Activated CD8-positive, alpha-beta T cell treated with anti-CD3 and anti-CD28 coated beads for 36 hours (primary cell): ENCODE measurements at regions of chr6 and their contacts with region 1.

Region 1: GRCh38 chr6:154606457-154606856 is 96.0 kb upstream of the CNKSR3 start:
- DNase-seq: peak; percentile 99
- ATAC-seq: peak; percentile 95
- H3K4me3 Mint-ChIP-seq: peak overlapping the region; percentile 50
- H3K27ac Mint-ChIP-seq: peak overlapping the region; percentile 86
- H3K4me1 Mint-ChIP-seq: peaks cover 38% of the 10 kb centered on the region
- H3K27me3 Mint-ChIP-seq: peaks cover 3% of the 10 kb centered on the region
- CTCF ChIP-seq: no peak

Region 2: DNA sequence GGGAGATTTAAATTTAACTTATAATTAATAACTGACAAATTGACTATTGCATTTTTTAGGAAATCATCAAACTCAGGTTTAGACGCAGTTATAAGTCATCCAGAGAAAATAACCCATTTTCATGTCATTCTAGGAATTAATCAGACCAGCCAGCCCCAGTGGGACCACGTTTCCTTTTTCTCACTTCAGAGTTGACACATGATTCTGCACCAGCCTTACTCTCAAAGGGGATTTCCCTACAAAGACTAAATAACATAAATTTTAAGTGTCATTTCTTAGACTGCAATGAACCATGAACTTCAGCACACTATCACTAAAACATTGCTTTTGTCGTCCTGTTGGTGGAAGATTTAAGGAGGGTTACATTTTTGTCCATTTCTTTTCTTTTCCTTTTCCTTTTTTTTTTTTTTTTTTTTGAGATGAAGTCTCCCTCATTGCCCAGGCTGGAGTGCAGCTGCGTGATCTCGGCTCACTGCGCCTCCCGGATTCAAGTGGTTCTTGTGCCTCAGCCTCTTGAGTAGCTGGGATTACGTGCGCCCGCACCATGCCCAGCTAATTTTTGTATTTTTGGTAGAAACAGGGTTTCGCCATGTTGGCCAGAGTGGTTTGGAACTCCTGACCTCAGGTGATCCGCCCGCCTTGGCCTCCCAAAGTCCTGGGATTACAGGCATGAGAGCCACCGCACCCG is 253.4 kb before region 1 on chr6:
- CTCF ChIA-PET with region 1: no interaction called
- POLR2A ChIA-PET with region 1: no interaction called
- intact Hi-C with region 1: loop called (anchors 5 kb)
- DNase-seq: peak; percentile 82
- ATAC-seq: peak; percentile 84
- H3K4me3 Mint-ChIP-seq: no peak overlapping the region
- H3K27ac Mint-ChIP-seq: no peak overlapping the region
- H3K4me1 Mint-ChIP-seq: peaks cover 50% of the 10 kb centered on the region
- H3K27me3 Mint-ChIP-seq: peaks cover 8% of the 10 kb centered on the region
- CTCF ChIP-seq: no peak

Region 3: DNA sequence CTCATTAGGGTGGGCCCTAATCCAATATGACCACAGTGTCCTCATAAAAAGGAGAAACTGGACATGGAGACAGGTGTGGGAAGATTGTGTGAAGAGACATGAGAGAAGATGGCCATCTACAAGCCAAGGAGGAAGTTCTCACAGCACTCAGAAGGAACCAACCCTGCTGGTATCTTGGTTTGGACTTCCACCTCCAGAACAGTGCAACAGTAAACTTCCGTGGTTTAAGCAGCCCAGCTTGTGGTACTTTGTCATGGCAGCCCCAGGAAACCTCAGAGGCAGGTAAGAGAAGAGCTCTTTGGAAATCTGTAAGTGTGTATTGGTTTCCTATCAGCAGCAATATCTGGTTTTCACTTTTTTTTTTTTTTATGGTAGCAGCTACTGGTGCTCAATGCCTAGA is 79.5 kb before region 1 on chr6:
- CTCF ChIA-PET with region 1: no interaction called
- POLR2A ChIA-PET with region 1: no interaction called
- intact Hi-C with region 1: no loop called
- DNase-seq: no peak
- ATAC-seq: no peak
- H3K4me3 Mint-ChIP-seq: no peak overlapping the region
- H3K27ac Mint-ChIP-seq: no peak overlapping the region
- H3K4me1 Mint-ChIP-seq: no peaks in the 10 kb centered on the region
- H3K27me3 Mint-ChIP-seq: peaks cover 2% of the 10 kb centered on the region
- CTCF ChIP-seq: no peak

Region 4: DNA sequence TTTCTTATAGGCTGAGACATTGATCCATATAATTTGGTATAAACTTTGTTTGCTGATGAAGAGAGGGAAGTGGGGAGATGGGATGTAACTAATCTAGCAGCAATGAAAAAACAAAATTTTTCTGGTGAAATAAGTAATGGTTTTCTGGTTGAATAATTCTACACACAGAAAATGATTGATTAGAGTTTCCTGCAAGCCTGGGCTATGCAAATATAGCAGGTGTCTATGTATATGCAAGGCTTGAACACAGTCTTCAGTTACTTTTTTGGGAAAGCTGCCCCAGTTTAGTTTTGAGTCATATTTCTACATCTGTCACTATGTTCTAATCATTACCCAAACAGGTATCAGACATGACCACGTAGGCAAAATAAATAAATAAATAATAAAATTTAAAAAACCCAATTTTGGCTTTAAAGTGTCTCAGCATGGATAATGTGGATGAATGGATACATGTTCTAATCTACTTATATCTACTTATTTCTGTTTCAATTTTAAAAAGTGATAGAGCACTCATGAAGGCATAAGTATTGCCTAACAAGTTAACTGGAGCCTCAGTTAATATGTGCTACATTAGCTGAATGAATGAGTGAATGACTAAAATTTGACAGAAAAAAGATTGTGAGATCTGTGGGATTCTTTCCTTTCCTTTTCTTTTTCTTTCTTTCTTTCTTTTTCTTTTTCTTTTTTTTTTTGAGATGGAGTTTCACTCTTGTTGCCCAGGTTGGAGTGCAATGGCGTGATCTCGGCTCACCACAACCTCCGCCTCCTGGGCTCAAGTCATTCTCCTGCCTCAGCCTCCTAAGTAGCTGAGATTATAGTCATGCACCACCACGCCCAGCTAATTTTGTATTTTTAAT is 745.0 kb after region 1 on chr6:
- CTCF ChIA-PET with region 1: no interaction called
- POLR2A ChIA-PET with region 1: no interaction called
- intact Hi-C with region 1: no loop called
- DNase-seq: no peak
- ATAC-seq: no peak
- H3K4me3 Mint-ChIP-seq: no peak overlapping the region
- H3K27ac Mint-ChIP-seq: no peak overlapping the region
- H3K4me1 Mint-ChIP-seq: peaks cover 6% of the 10 kb centered on the region
- H3K27me3 Mint-ChIP-seq: no peaks in the 10 kb centered on the region
- CTCF ChIP-seq: no peak